HepG2 (cell line): ENCODE measurements at regions of chr1 and their contacts with region 1.

Region 1: DNA sequence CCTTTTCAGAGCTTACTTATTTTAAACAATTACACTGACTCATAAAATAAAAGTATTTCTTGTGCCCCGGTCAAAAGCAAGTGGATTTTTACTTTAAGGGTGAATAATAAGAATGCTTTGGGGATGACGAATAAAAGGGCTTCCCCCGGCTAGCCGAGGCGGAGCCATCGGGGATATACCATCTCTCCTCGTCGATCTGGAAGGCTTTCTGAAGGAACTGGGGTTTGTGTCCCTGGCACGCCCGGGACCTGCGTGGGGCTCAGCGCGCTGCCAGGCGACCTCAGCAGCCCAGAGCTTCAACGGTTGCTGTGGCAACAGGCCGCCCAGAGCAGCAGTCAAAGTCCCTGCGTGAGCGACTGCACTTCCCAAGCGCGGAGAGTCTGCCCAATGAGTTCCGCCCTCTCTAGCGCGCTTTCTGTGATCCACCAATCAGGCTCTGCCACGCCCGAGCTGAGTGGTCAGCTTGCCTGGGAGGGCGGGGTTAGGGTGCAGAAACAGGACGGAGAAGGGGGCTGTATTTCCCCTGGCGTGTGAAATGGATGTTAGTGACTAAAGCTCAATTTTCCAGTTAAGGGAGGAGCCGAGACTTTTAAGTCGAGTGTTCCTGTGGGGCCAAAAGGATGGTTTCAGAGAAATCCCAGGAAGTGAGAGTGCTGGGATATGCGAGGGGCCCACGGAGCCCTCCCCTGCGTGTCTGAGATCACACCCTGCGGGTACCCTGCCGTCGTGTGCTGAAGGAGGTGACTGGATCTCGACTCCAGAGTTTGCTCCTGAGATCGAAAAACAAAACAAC is 33.0 kb upstream of the MGST3 start:
- DNase-seq: peak; percentile 90
- ATAC-seq: peak; percentile 99
- H3K4me3 ChIP-seq: peak overlapping the region; percentile 55 to 77 (median 70)
- H3K27ac ChIP-seq: peak overlapping the region; percentile 26
- H3K4me1 ChIP-seq: peaks cover 38% of the 10 kb centered on the region
- H3K27me3 ChIP-seq: no peaks in the 10 kb centered on the region
- CTCF ChIP-seq: no peak
- EP300 ChIP-seq: no peak
- POLR2A ChIP-seq: 0 out of 4 replicates have a peak, but pooled peaks of 1 of the 2 experiments have one; percentile 1
- RAD21 ChIP-seq: no peak

Region 2: DNA sequence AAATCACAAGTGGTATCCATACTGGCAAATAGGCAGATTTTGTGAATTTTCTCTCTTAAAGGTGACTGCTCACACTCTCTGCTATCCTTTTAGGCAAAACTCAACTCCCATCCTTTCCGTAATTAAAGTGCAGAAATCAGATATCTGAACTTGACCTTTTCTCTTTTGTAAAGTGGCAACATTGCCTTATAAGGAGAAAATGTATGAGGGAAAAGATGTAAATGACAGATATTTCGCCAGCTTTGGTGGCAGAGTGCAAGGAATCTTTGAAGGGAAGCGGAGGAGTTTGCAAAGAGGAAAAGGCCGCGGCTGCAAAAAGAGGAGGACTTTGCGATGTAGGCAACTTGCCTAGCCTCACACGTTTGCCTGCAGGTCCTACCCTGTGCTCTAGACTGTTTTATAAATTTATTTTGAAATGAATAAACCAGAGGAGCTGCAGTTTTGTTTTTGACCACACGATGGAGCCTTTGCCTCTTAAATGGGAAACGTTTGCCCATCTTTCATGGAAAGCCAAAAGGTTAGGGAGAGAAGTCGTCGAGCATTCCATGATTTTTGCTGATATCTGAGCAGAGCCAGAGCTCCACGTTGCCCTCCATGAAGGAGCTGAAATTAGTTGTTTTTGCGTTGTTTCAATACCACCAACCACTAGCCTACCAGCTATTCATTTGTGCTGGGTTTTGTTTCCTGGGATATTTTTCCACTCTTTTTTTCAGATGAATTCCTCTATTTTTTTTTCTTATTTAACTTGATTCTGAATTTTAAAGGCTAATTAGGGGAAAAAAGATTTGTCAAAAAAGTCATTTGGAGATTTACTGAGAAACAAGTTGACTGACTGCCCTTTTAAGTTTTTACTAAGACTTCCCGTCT is 483.8 kb before region 1 on chr1:
- CTCF ChIA-PET with region 1: no interaction called
- POLR2A ChIA-PET with region 1: no interaction called
- in situ Hi-C with region 1: no loop called
- intact Hi-C with region 1: loop called (anchors 2 kb)
- DNase-seq: peak; percentile 35
- ATAC-seq: peak; percentile 67
- H3K4me3 ChIP-seq: no peak overlapping the region
- H3K27ac ChIP-seq: no peak overlapping the region
- H3K4me1 ChIP-seq: no peaks in the 10 kb centered on the region
- H3K27me3 ChIP-seq: 0 out of 5 replicates have a peak, but pooled peaks cover 0 to 10% of the 10 kb centered on the region in 2 experiments
- CTCF ChIP-seq: peak; percentile 64
- EP300 ChIP-seq: no peak
- POLR2A ChIP-seq: no peak
- RAD21 ChIP-seq: peak; percentile 43; the same call in 1 of the 2 replicates

Region 3: DNA sequence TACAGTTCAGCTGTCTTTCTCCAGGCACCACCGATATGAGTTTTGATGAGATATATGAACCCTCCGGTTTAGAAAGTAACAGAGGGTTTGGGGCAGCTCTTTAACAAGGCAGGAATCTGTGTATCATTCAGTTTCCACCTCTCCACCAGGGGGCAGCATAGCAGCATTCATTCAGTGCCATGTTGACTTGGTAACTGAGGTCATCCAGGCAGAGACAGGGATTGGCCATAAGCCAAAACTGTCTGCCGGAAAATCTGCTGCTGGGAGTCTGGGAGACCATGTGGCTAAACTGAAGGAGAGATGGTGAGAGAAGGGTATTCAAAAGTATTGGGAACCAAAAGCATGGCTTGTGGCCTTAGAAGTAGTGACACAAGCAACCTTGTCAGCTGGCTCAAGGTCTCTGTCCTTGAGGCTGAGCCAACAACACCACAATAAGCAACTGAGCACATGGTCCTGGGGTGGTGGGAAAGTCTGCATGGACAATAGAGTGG is 340.1 kb before region 1 on chr1:
- CTCF ChIA-PET with region 1: no interaction called
- POLR2A ChIA-PET with region 1: no interaction called
- in situ Hi-C with region 1: no loop called
- intact Hi-C with region 1: loop called (anchors 10 kb)
- DNase-seq: peak; percentile 60
- ATAC-seq: peak; percentile 22
- H3K4me3 ChIP-seq: no peak overlapping the region
- H3K27ac ChIP-seq: no peak overlapping the region
- H3K4me1 ChIP-seq: peaks cover 62% of the 10 kb centered on the region
- H3K27me3 ChIP-seq: no peaks in the 10 kb centered on the region
- CTCF ChIP-seq: peak; percentile 71
- EP300 ChIP-seq: no peak
- POLR2A ChIP-seq: no peak
- RAD21 ChIP-seq: no peak; the same call in 1 of the 2 replicates

Region 4: DNA sequence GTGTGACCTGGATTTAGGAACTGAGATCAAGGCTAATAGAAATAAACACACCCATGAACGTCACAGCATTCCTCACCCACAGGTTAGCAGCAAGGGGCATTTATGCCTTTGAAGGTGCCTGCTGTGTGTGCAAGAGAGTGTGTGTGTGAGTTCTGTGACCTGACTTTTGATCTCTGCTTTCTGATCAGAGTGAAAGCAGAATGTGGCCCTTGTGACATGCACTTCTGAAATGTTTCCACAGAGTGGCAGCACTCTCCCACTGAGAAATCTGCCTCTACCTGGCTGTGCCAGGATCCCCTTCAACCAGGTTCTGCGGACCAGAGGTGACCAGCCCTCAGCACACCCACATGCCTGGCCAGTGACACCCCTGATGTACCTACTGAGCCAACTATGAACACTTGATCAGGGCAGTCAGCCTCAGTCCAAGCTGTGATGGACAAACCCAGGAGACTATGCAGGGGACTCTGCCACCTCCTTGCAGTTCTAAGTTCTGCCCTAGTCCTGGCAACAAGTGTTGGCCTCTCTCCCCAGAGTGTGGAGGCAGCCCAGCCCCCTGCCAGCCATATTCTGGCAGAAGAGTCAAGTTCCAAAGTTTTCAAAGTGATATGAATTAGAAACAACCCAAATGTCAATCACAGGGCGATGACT is 194.1 kb before region 1 on chr1:
- CTCF ChIA-PET with region 1: interaction called, 32 read pairs
- POLR2A ChIA-PET with region 1: no interaction called
- in situ Hi-C with region 1: loop called (anchors 5 kb)
- intact Hi-C with region 1: loop called (anchors 1 kb)
- DNase-seq: peak; percentile 58
- ATAC-seq: peak; percentile 91
- H3K4me3 ChIP-seq: no peak overlapping the region
- H3K27ac ChIP-seq: no peak overlapping the region
- H3K4me1 ChIP-seq: peaks cover 10% of the 10 kb centered on the region; the same call in 1 of the 2 replicates
- H3K27me3 ChIP-seq: no peaks in the 10 kb centered on the region
- CTCF ChIP-seq: peak; percentile 91
- EP300 ChIP-seq: no peak
- POLR2A ChIP-seq: no peak
- RAD21 ChIP-seq: peak; percentile 81

Region 5: DNA sequence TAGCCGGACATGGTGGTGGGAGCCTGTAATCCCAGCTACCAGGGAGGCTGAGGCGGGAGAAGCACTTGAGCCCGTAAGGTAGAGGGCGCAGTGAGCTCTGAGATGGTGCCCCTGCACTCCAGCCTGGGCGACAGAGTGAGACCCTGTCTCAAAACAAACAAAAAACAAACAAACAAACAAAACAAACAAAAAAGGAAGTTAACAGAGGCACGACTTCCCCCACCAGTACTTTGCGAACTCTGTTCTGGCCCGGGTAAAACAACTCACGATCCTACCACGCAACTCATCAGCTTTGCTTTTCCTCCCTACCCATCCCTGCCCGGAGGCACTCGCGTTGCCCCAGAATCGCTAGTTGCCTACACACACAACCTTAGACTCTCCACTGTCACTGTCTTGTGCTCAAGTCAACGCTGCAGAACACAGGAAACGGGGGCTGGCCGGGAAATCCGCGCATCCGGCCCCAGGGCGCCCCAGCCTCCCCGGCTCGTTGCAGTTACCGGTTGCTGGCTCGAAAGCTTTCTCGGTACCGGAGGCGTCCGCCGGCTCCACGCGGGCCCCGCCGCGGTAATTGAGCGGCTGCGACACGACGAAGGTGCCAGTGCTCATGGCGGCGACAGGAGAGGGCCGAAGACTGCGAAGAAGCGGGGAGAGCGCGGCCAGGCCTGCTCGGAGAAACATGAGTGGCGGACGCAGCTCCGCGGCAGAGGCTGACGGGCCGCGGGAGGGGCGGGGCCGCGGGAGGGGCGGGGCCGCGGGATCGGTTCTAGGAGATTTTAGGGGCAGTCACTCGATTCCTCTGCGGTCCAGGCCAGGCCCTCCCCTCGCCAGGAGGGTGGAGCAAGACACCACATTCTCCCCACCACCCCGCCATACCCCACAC is 100.0 kb after region 1 on chr1 and contains the start of gene ALDH9A1:
- CTCF ChIA-PET with region 1: no interaction called
- POLR2A ChIA-PET with region 1: interaction called, 4 read pairs
- in situ Hi-C with region 1: no loop called
- intact Hi-C with region 1: loop called (anchors 5 kb)
- DNase-seq: peak; percentile 32
- ATAC-seq: peak; percentile 94
- H3K4me3 ChIP-seq: peak within 1 kb of the TSS; percentile 83 to 96 (median 85)
- H3K27ac ChIP-seq: peak within 1 kb of the TSS; percentile 82
- H3K4me1 ChIP-seq: peaks cover 57% of the 10 kb centered on the region
- H3K27me3 ChIP-seq: no peaks in the 10 kb centered on the region; a peak in 2 of 5 replicates
- CTCF ChIP-seq: peak; percentile 74
- EP300 ChIP-seq: no peak
- POLR2A ChIP-seq: peak in 1 of 2 experiments; percentile 78; a peak in 2 of 4 replicates
- RAD21 ChIP-seq: no peak
- total RNA-seq, gene ALDH9A1: 38.5 and 52.7 TPM in 2 replicates

Region 6: GRCh38 chr1:166221316-166221715 is 623.2 kb after region 1 on chr1:
- CTCF ChIA-PET with region 1: no interaction called
- POLR2A ChIA-PET with region 1: no interaction called
- in situ Hi-C with region 1: no loop called
- intact Hi-C with region 1: no loop called
- DNase-seq: no peak
- ATAC-seq: no peak
- H3K4me3 ChIP-seq: no peak overlapping the region
- H3K27ac ChIP-seq: no peak overlapping the region
- H3K4me1 ChIP-seq: no peaks in the 10 kb centered on the region
- H3K27me3 ChIP-seq: no peaks in the 10 kb centered on the region; a peak in 1 of 5 replicates
- CTCF ChIP-seq: no peak
- EP300 ChIP-seq: no peak
- POLR2A ChIP-seq: no peak
- RAD21 ChIP-seq: no peak

Region 7: DNA sequence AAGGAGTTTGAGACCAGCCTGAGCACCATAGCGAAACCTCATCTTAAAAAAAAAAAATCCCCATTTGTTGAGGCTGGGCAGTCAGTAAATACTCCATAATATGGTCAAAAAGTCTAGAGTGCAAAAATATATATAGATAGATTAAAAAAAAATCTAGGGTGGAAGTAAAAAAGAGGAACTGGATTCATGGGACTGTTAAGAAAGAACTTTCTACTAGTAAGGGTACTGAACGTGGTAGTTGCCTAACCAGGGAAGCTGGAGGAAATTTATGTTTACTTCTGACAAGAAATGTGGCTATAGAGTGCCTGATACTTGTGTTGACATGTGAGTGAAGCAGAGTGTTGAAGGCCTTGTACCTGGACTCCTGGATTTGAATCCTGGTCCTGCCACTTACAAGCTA is 834.6 kb after region 1 on chr1:
- CTCF ChIA-PET with region 1: no interaction called
- POLR2A ChIA-PET with region 1: no interaction called
- in situ Hi-C with region 1: no loop called
- intact Hi-C with region 1: loop called (anchors 1 kb)
- DNase-seq: no peak
- ATAC-seq: no peak
- H3K4me3 ChIP-seq: no peak overlapping the region
- H3K27ac ChIP-seq: no peak overlapping the region
- H3K4me1 ChIP-seq: no peaks in the 10 kb centered on the region
- H3K27me3 ChIP-seq: no peaks in the 10 kb centered on the region
- CTCF ChIP-seq: no peak
- EP300 ChIP-seq: no peak
- POLR2A ChIP-seq: no peak
- RAD21 ChIP-seq: no peak